B cell (primary cell): ENCODE measurements at regions of chr5 and their contacts with region 1.

Region 1: DNA sequence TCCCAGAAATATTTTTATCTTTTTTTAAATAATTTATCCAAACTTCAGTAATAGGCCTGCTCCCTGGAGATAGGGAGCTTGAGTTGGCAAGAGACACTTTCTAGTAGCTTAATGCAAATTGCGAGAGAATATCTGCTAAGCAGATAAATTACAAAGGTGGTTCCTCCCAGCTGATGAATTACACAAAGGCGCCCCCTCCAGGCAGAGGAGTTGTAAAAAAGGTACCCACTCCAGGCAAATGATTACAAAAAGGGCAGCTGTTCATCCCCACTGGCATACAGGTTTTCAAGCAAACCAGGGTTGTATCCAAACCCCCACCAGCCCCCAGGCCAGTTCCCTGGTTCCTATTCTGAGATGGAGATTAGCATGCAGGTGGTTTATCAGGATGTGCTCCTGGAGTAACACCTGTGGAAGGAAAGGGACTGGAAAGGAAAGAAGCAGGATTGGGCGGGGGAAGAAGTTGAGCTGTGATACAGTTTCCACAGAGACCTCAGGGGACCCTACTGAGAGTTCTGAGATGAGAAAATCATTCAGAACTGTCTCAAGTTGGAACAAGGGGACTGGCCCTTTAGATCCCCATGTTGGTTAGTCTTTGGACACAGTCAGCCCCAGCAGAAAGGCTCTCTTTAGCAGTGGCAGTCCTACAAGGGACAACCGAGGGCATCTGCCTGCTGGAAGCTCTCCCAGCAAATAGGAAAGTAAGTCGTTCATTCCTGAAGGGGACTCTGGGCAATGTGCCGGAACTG is 25.5 kb downstream of the ESM1 start:
- DNase-seq: no peak
- ATAC-seq: no peak
- H3K4me3 ChIP-seq: no peak overlapping the region
- H3K4me3 Mint-ChIP-seq: no peak overlapping the region
- H3K27ac ChIP-seq: no peak overlapping the region
- H3K27ac Mint-ChIP-seq: no peak overlapping the region
- H3K4me1 ChIP-seq: no peaks in the 10 kb centered on the region
- H3K4me1 Mint-ChIP-seq: no peaks in the 10 kb centered on the region
- H3K27me3 ChIP-seq: peaks cover 0 to 3% (median 0%) of the 10 kb centered on the region in 4 experiments
- H3K27me3 Mint-ChIP-seq: peaks cover 34% of the 10 kb centered on the region
- CTCF ChIP-seq: no peak

Region 2: GRCh38 chr5:54944364-54944763 is 15.5 kb before region 1 on chr5:
- CTCF ChIA-PET with region 1: interaction called, 11 read pairs
- POLR2A ChIA-PET with region 1: no interaction called
- intact Hi-C with region 1: no loop called
- DNase-seq: peak; percentile 10
- ATAC-seq: no peak
- H3K4me3 ChIP-seq: no peak overlapping the region
- H3K4me3 Mint-ChIP-seq: no peak overlapping the region
- H3K27ac ChIP-seq: no peak overlapping the region
- H3K27ac Mint-ChIP-seq: no peak overlapping the region
- H3K4me1 ChIP-seq: no peaks in the 10 kb centered on the region
- H3K4me1 Mint-ChIP-seq: no peaks in the 10 kb centered on the region
- H3K27me3 ChIP-seq: peaks cover 0 to 6% (median 0%) of the 10 kb centered on the region in 4 experiments
- H3K27me3 Mint-ChIP-seq: peaks cover 19% of the 10 kb centered on the region
- CTCF ChIP-seq: peak; percentile 65